B cell (primary cell): ENCODE measurements at regions of chr4 and their contacts with region 1.

Region 1: DNA sequence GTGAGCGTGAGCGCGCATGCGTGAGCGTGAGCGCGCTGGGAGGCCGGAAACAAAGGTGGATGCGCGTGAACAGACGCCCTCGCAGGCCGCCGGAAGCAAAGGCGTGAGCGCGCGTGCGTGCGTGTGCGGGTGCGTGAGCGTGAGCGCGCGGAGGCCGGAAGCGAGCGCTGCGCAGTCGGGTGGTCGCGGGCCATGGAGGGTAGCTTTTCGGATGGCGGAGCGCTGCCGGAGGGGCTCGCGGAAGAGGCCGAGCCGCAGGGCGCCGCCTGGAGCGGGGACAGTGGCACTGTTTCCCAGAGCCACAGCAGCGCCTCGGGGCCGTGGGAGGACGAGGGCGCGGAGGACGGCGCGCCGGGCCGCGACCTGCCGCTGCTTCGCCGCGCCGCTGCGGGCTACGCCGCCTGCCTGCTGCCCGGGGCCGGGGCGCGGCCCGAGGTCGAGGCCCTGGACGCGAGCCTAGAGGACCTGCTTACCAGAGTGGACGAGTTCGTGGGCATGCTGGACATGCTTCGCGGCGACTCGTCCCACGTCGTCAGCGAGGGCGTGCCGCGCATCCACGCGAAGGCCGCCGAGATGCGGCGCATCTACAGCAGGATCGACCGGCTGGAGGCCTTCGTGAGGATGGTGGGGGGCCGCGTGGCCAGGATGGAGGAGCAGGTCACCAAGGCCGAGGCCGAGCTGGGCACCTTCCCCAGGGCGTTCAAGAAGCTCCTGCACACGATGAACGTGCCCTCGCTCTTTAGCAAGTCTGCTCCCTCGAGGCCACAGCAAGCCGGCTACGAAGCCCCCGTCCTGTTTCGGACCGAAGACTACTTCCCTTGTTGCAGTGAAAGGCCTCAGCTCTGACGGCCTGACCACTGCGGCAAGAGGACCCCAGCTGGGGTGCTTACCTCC is at the start of gene BLOC1S4:
- DNase-seq: peak; percentile 97
- ATAC-seq: peak; percentile 83
- H3K4me3 ChIP-seq: peak within 1 kb of the TSS; percentile 67 to 82 (median 80)
- H3K4me3 Mint-ChIP-seq: peak within 1 kb of the TSS; percentile 99
- H3K27ac ChIP-seq: peak within 1 kb of the TSS; percentile 76 to 85
- H3K27ac Mint-ChIP-seq: peak within 1 kb of the TSS; percentile 100
- H3K4me1 ChIP-seq: peaks cover 21 to 33% of the 10 kb centered on the region in 2 donors
- H3K4me1 Mint-ChIP-seq: peaks cover 38% of the 10 kb centered on the region
- H3K27me3 ChIP-seq: no peaks in the 10 kb centered on the region
- H3K27me3 Mint-ChIP-seq: no peaks in the 10 kb centered on the region
- CTCF ChIP-seq: no peak
- total RNA-seq, gene BLOC1S4: 25.3 and 26.3 TPM in 2 replicates

Region 2: DNA sequence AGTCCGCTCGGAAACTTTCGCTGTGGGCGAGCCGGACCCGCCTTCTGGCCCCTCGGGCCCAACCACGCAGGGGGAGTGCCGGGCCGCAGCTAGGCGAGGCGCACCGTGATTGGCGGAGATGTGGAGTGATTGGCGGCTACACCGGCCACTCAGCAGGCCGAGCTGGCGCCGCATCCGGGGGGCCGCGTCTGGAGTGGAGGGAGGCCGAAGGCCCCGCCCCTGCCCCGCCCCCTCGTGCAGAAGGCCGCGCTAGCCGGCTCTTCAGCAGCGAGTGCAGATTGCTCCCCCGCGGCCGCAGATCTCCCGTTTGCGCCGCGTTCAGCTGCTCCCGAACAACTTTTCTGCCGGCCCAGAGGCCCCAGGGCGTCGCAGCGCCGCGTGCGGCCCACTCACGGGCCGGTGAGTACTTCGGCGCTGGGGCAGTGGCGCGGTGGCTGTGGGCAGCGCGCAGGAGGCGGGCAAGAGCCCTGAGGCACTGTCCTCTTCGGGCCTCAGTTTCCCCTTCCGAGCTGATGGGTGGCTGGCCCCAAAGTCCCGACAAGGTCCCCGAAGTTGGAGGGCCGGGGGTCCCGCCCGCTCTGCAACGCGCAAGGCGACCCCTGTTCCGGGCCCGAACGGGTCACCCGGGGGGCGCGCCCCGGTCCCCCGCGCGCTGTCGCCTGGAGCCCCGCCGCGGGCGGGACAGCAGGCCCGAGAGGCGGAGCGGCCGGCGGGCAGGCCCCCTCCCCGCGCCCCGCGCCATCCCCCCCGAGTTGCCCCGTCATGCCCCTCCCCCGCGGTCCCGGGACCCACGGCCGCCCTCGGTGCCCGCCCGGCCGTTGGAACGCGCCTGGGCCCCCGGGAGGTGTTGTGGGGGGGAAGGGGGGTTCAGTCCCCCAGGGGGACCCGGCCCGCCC is 446.4 kb before region 1 on chr4 and contains the start of gene WFS1:
- CTCF ChIA-PET with region 1: no interaction called
- POLR2A ChIA-PET with region 1: no interaction called
- intact Hi-C with region 1: loop called (anchors 2 kb)
- DNase-seq: peak; percentile 99
- ATAC-seq: peak; percentile 99
- H3K4me3 ChIP-seq: peak within 1 kb of the TSS; percentile 13 to 95 (median 88)
- H3K4me3 Mint-ChIP-seq: peak within 1 kb of the TSS; percentile 92
- H3K27ac ChIP-seq: no peak within 1 kb of the TSS
- H3K27ac Mint-ChIP-seq: peak within 1 kb of the TSS; percentile 68
- H3K4me1 ChIP-seq: peaks cover 22 to 33% of the 10 kb centered on the region in 2 donors
- H3K4me1 Mint-ChIP-seq: peaks cover 32% of the 10 kb centered on the region
- H3K27me3 ChIP-seq: no peaks in the 10 kb centered on the region
- H3K27me3 Mint-ChIP-seq: peaks cover 1% of the 10 kb centered on the region
- CTCF ChIP-seq: no peak
- total RNA-seq, gene WFS1: 6.7 and 7.2 TPM in 2 replicates

Region 3: DNA sequence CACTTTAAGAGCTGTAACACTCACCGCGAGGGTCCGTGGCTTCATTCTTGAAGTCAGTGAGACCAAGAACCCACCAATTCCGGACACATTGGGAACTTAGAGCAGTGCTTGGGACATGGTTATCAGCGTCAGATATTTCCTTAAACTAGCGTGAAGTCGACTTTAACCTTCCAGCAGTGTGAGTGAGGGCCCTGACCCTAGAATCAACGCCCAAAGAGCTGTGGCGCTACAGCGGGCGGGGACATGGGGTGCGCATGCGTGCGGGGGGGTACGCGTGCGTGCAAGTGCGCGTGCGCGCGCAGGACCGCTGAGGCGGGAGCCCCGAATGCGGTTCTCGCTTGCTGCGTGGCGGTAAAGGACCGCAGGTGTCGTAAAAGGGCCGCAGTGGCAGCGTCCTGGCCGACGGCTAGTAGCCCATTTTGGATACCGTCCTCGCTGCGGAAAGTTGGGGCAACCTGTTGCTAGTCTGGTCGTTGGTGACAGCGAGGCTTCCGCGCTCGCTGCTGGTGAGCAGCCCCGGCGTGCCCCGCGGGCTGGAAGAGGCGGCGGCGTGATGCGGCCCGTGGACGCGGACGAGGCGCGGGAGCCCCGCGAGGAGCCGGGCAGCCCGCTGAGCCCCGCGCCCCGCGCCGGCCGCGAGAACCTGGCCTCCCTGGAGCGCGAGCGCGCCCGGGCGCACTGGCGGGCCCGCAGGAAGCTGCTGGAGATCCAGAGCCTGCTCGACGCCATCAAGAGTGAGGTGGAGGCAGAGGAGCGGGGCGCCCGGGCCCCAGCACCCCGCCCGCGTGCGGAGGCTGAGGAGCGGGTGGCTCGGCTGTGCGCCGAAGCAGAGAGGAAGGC is 42.4 kb before region 1 on chr4:
- CTCF ChIA-PET with region 1: interaction called, 9 read pairs
- POLR2A ChIA-PET with region 1: interaction called, 13 read pairs
- intact Hi-C with region 1: loop called (anchors 2 kb)
- DNase-seq: peak; percentile 97
- ATAC-seq: peak; percentile 89
- H3K4me3 ChIP-seq: peak overlapping the region; percentile 22 to 82 (median 63)
- H3K4me3 Mint-ChIP-seq: peak overlapping the region; percentile 91
- H3K27ac ChIP-seq: peak overlapping the region; percentile 67 to 71
- H3K27ac Mint-ChIP-seq: peak overlapping the region; percentile 99
- H3K4me1 ChIP-seq: peaks cover 27 to 35% of the 10 kb centered on the region in 2 donors
- H3K4me1 Mint-ChIP-seq: peaks cover 43% of the 10 kb centered on the region
- H3K27me3 ChIP-seq: no peaks in the 10 kb centered on the region
- H3K27me3 Mint-ChIP-seq: no peaks in the 10 kb centered on the region
- CTCF ChIP-seq: no peak

Region 4: GRCh38 chr4:6873792-6874461 is 157.7 kb after region 1 on chr4:
- CTCF ChIA-PET with region 1: interaction called, 163 read pairs
- POLR2A ChIA-PET with region 1: interaction called, 3 read pairs
- intact Hi-C with region 1: loop called (anchors 1 kb)
- DNase-seq: peak; percentile 72
- ATAC-seq: peak; percentile 50
- H3K4me3 ChIP-seq: no peak overlapping the region
- H3K4me3 Mint-ChIP-seq: no peak overlapping the region
- H3K27ac ChIP-seq: no peak overlapping the region
- H3K27ac Mint-ChIP-seq: peak overlapping the region; percentile 53
- H3K4me1 ChIP-seq: peaks cover 10 to 14% of the 10 kb centered on the region in 2 donors
- H3K4me1 Mint-ChIP-seq: peaks cover 12% of the 10 kb centered on the region
- H3K27me3 ChIP-seq: no peaks in the 10 kb centered on the region
- H3K27me3 Mint-ChIP-seq: no peaks in the 10 kb centered on the region
- CTCF ChIP-seq: peak; percentile 82

Region 5: DNA sequence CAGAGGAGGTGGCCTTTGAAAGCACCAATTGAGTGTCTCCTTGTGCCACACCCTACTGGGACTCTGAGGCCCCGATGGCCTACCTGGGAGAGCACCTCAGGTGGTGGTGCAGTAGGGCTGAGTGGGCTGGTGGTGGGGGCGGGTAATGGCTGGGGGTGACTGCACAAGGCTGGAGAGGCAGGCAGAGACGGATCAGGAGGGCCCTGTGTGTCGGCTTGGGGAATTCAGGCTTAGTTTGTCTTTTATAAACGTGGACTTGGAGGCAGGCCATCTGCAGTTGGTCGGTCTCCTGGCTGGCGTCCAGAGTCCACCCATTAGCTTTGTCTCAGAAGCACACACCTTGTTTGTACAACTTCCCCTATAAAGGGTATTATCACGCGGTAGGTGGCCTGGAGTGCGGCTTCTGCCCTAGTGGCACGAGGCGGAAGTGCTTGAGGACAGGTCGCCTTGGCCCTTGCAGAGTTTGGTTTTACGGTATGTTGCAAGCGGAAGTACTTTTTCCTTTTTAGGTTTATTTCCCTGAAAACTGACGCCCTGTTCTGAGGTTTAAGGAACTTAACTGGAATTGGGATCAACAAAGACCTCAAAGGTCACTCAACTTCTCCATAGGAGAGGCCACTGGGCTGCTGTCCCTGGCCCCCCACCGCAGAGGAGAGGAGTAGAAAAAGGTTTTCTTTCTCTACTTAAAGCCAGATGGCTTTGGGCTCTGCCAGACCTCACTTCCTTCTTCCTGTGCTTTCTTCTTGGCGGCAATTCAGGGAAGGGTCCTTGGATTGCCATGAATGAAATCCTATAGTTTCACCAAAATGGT is 201.4 kb after region 1 on chr4:
- CTCF ChIA-PET with region 1: no interaction called
- POLR2A ChIA-PET with region 1: no interaction called
- intact Hi-C with region 1: loop called (anchors 10 kb)
- DNase-seq: peak; percentile 80
- ATAC-seq: peak; percentile 90
- H3K4me3 ChIP-seq: peak overlapping the region in 2 of 5 experiments; percentile 3 to 34
- H3K4me3 Mint-ChIP-seq: peak overlapping the region; percentile 72
- H3K27ac ChIP-seq: peak overlapping the region; percentile 44 to 55
- H3K27ac Mint-ChIP-seq: peak overlapping the region; percentile 88
- H3K4me1 ChIP-seq: peaks cover 33 to 37% of the 10 kb centered on the region in 2 donors
- H3K4me1 Mint-ChIP-seq: peaks cover 39% of the 10 kb centered on the region
- H3K27me3 ChIP-seq: no peaks in the 10 kb centered on the region
- H3K27me3 Mint-ChIP-seq: no peaks in the 10 kb centered on the region
- CTCF ChIP-seq: peak; percentile 77

Region 6: DNA sequence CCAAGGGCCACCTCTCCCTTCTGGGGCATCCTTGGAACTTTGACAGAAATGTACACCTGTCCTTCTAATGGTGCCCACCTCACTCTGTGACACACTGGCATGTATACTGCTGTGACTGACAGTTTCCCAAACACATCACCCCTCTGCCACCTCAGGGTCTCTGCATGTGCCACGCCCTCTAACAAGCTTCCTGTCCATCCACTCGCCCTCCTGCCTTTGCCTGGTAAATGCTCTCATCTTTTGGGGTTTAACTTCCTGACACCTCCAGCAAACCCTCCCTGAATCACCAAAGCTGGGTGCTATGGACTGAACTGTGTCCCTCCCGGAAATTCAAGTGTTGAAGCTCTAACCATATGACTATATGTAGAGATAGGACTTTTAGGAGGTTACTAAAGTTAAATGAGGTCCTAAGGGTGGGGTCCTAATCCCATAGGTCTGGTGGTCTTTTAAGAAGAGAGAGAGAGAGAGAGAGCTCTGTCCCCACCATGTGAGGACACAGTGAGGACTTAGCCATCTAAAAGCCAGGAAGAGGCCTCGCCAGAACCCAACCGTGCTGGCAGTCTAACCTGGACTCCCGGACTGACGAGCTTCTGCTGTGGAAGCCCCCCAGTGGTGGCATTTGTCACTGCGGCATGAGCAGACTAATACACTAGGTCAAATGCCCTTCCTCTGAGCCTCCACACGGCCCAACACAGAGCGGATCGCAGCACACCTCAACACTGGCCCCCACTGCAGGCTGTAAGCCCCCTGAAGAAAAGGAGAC is 1127.7 kb after region 1 on chr4:
- CTCF ChIA-PET with region 1: no interaction called
- POLR2A ChIA-PET with region 1: no interaction called
- intact Hi-C with region 1: no loop called
- DNase-seq: peak; percentile 27
- ATAC-seq: peak; percentile 39
- H3K4me3 ChIP-seq: no peak overlapping the region
- H3K4me3 Mint-ChIP-seq: no peak overlapping the region
- H3K27ac ChIP-seq: no peak overlapping the region
- H3K27ac Mint-ChIP-seq: no peak overlapping the region
- H3K4me1 ChIP-seq: no peaks in the 10 kb centered on the region
- H3K4me1 Mint-ChIP-seq: no peaks in the 10 kb centered on the region
- H3K27me3 ChIP-seq: no peaks in the 10 kb centered on the region
- H3K27me3 Mint-ChIP-seq: peaks cover 9% of the 10 kb centered on the region
- CTCF ChIP-seq: peak; percentile 65